ENCODE measurements at regions of chrX and their contacts with region 1.

Region 1: DNA sequence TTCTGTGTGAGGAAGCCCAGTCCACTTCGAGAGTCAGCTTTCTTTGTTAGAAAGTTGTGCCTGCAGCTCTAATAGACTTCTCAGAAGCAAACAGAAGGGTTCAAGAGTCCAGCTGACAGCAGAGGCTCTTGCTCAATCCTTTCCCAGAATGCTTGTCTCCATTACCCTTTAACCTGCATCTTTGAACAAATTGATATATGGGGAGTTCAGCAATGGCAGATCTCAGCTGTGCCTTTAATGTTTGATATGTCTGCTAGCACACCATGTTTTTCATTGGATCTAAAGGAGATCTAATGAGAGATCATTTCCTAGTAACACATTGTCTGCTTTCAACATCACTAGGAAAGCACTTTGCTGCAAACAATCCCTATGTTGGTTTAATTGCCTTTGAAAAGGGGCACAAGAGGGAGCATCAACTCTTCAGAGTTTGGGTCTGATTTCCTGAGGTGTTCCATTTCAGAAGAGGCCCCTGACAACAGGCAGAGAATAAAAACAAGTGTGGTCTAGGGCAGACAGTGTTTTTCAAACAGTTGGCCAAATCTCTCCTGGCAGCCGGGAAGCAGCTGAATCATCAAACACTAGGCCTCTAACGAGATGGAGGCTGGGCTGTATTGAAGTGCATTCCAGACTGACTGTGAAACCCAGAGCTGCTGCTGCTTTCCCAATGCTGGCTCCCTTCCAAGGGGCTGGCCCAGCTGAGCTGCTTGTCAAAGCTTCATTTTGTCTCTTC is 55.5 kb downstream of the LUZP4 start:
- DNase-seq: peak; percentile 53 to 95
- H3K4me3 ChIP-seq: no peak overlapping the region
- H3K27ac ChIP-seq: peak overlapping the region; percentile 76 to 83
- H3K4me1 ChIP-seq: peaks cover 0 to 17% of the 10 kb centered on the region in 2 donors
- H3K27me3 ChIP-seq: no peaks in the 10 kb centered on the region
- CTCF ChIP-seq: no peak

Region 2: GRCh38 chrX:115459883-115460880 is 115.1 kb after region 1 on chrX:
- intact Hi-C with region 1: loop called (anchors 5 kb)
- DNase-seq: no peak
- H3K4me3 ChIP-seq: no peak overlapping the region
- H3K27ac ChIP-seq: peak overlapping the region; percentile 46 to 47
- H3K4me1 ChIP-seq: no peaks in the 10 kb centered on the region
- H3K27me3 ChIP-seq: no peaks in the 10 kb centered on the region
- CTCF ChIP-seq: no peak